ENCODE measurements at regions of chr9 and their contacts with region 1.

Region 1: DNA sequence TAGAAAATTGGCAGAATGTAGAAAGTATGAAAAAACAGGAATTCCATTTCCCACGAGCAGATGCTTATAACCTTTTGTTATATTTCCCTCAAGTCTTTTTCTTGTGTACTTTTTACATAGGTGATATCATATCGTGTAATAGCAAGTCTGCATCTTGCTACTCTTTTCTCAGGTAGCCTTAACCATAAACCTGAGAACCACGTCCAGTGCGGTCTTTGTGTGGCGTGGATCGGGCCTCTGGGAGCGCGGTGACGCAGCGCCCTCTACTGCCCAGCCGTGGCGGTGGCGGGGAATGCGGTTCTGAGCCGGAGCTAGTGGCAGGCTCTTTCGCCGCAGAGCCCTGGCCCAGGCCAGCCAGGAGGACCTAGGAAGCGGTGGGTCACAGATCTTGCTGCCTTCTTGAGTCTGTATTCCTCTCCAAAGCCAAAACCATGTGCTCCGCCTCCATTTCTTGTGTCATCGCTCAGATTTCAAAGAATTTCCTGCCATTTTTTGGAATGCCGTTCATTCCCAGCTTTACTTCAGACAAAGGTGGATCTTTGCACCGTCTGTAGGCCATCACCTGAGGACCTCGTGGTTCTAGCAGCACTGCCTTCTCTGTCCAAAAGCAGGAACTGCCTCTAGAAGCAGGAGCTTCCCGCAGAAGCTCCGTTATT is 71.9 kb downstream of the MVB12B start:
- DNase-seq: peak; percentile 91
- H3K4me3 ChIP-seq: peak overlapping the region in 1 of 2 experiments; percentile 51; a peak in 1 of 4 replicates
- H3K27ac ChIP-seq: no peak overlapping the region
- H3K4me1 ChIP-seq: peaks cover 3 to 5% of the 10 kb centered on the region in 2 experiments; a peak in 1 of 4 replicates
- H3K27me3 ChIP-seq: no peaks in the 10 kb centered on the region
- CTCF ChIP-seq: peak; percentile 99
- EP300 ChIP-seq: no peak
- RAD21 ChIP-seq: peak; percentile 98

Region 2: DNA sequence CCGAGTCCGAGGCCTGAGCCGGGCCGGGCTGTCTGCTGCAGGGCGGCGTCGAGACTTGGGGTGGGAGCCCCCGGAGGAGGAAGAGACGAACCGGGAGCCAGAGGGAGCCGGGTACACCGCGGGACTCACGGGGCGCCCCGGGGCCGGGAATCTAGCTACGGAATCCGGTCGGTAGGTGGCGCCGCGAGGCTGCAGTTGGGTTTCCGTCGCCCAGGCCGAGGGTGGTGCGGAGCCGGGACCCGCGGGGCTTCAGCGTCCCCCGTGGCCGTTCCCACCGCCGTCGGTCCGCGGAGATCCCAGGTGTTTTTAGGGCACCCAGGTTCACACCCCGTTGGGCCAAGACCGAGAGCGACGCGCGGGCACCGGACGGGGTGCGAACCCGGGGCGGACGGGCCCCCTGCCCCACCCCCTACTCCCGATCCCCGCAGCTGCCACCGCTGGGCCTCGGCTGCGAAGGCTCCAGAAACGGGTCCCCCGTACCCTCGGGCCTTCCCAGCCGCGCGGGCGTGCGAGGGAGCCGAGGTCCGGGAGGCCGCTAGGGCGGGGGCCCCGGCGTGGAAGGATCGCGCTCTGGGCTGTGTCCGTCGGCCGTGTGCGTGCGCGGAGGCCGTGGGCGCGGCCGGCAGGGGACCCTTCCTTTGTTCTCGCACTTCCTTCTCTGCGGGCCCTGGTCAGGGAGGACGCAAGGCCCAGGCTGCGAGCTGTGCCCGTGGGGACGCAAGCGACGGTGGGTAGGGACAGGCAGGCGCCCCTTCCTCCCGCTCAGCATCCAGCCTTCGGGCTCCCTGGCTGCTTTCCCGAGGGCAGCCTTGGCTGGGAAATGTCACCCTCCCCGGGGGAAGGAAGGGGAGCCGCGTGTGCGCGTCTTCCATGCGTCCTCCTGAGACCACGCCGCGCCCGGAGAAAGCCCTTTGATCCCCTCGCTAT is 990.3 kb before region 1 on chr9:
- CTCF ChIA-PET with region 1: interaction called, 28 read pairs
- POLR2A ChIA-PET with region 1: no interaction called
- DNase-seq: peak; percentile 97
- H3K4me3 ChIP-seq: peak overlapping the region; percentile 46 to 68
- H3K27ac ChIP-seq: no peak overlapping the region
- H3K4me1 ChIP-seq: peaks cover 0 to 5% of the 10 kb centered on the region in 2 experiments; a peak in 1 of 4 replicates
- H3K27me3 ChIP-seq: no peaks in the 10 kb centered on the region
- CTCF ChIP-seq: peak; percentile 84
- EP300 ChIP-seq: no peak
- RAD21 ChIP-seq: peak; percentile 87

Region 3: GRCh38 chr9:126058011-126058531 is 340.5 kb before region 1 on chr9:
- CTCF ChIA-PET with region 1: no interaction called
- POLR2A ChIA-PET with region 1: no interaction called
- DNase-seq: peak; percentile 66
- H3K4me3 ChIP-seq: peak overlapping the region; percentile 36 to 54; a peak in 3 of 4 replicates
- H3K27ac ChIP-seq: peak overlapping the region; percentile 41 to 97; a peak in 3 of 4 replicates
- H3K4me1 ChIP-seq: peaks cover 0 to 35% of the 10 kb centered on the region in 2 experiments; a peak in 2 of 4 replicates
- H3K27me3 ChIP-seq: peaks cover 11% of the 10 kb centered on the region; the same call in 1 of the 2 replicates
- CTCF ChIP-seq: no peak
- EP300 ChIP-seq: peak; percentile 14 to 75; a peak in 3 of 4 replicates
- RAD21 ChIP-seq: no peak

Region 4: GRCh38 chr9:126275386-126276001 is 123.0 kb before region 1 on chr9:
- CTCF ChIA-PET with region 1: interaction called, 13 read pairs
- POLR2A ChIA-PET with region 1: no interaction called
- DNase-seq: peak; percentile 45
- H3K4me3 ChIP-seq: no peak overlapping the region
- H3K27ac ChIP-seq: peak overlapping the region in 1 of 2 experiments; percentile 50; a peak in 2 of 4 replicates
- H3K4me1 ChIP-seq: peaks cover 0 to 26% of the 10 kb centered on the region in 2 experiments; a peak in 1 of 4 replicates
- H3K27me3 ChIP-seq: no peaks in the 10 kb centered on the region
- CTCF ChIP-seq: no peak
- EP300 ChIP-seq: no peak
- RAD21 ChIP-seq: no peak

Region 5: GRCh38 chr9:126326228-126327005 is 72.1 kb before region 1 on chr9 and contains the start of gene MVB12B:
- CTCF ChIA-PET with region 1: interaction called, 26 read pairs
- POLR2A ChIA-PET with region 1: no interaction called
- DNase-seq: peak; percentile 89
- H3K4me3 ChIP-seq: peak within 1 kb of the TSS; percentile 67 to 70
- H3K27ac ChIP-seq: peak within 1 kb of the TSS; percentile 36 to 78; a peak in 3 of 4 replicates
- H3K4me1 ChIP-seq: peaks cover 11 to 25% of the 10 kb centered on the region in 2 experiments; a peak in 3 of 4 replicates
- H3K27me3 ChIP-seq: no peaks in the 10 kb centered on the region
- CTCF ChIP-seq: no peak
- EP300 ChIP-seq: no peak
- RAD21 ChIP-seq: no peak
- polyA plus RNA-seq, gene MVB12B: 3.7 and 5.1 TPM in 2 replicates

Region 6: DNA sequence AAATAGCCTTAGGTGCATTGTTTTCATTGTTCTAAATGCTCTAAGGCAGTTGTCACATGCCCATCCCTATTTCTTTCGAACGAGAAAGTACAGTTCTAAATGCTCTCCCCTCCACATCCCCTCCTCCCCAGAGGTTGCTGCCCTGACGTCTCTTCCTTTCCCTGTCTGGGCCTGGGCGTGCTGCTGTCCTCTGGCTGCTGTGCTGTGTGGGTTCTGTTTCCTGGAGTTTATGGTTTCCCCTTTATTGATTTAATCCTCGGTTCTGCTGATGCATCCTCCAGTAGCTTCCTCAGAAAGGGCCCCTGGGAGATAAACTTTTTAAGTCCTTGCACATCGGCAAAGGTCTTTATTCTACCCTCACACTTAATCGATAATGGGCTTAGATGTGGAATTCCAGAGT is 23.1 kb before region 1 on chr9:
- CTCF ChIA-PET with region 1: interaction called, 43 read pairs
- POLR2A ChIA-PET with region 1: no interaction called
- DNase-seq: peak; percentile 49
- H3K4me3 ChIP-seq: no peak overlapping the region
- H3K27ac ChIP-seq: no peak overlapping the region
- H3K4me1 ChIP-seq: peaks cover 16 to 35% of the 10 kb centered on the region in 2 experiments; a peak in 3 of 4 replicates
- H3K27me3 ChIP-seq: no peaks in the 10 kb centered on the region
- CTCF ChIP-seq: no peak
- EP300 ChIP-seq: no peak
- RAD21 ChIP-seq: no peak

Region 7: GRCh38 chr9:126420643-126421577 is 22.4 kb after region 1 on chr9:
- CTCF ChIA-PET with region 1: interaction called, 18 read pairs
- POLR2A ChIA-PET with region 1: no interaction called
- DNase-seq: no peak
- H3K4me3 ChIP-seq: no peak overlapping the region
- H3K27ac ChIP-seq: no peak overlapping the region
- H3K4me1 ChIP-seq: peaks cover 0 to 27% of the 10 kb centered on the region in 2 experiments; a peak in 2 of 4 replicates
- H3K27me3 ChIP-seq: no peaks in the 10 kb centered on the region
- CTCF ChIP-seq: no peak
- EP300 ChIP-seq: no peak
- RAD21 ChIP-seq: no peak

Measured in SK-N-SH (cell line).